ENCODE measurements at regions of chr1 and their contacts with region 1.

Region 1: DNA sequence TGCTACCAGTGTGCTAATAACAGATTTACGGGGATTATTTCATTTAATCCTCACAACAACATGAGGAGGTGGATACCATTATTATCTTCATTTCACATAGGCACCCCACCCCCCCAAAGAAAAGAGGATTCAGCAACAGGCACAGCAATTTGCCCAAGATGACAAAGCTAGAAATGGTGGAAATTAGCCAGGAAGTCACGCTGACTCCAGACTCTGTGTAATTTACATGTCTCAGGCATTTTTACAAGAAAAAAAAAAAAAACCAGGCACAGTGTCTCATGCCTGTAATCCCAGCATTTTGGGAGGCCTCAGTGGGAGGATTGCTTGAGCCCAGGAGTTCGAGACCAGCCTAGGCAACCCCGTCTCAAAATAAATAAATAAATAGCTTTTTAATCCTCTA is 37.5 kb upstream of the PRDM2 start:
- DNase-seq: no peak
- H3K4me3 ChIP-seq: no peak overlapping the region
- H3K27ac ChIP-seq: no peak overlapping the region
- H3K4me1 ChIP-seq: no peaks in the 10 kb centered on the region
- H3K27me3 ChIP-seq: no peaks in the 10 kb centered on the region
- CTCF ChIP-seq: no peak
- EP300 ChIP-seq: no peak
- POLR2A ChIP-seq: no peak
- RAD21 ChIP-seq: no peak

Region 2: GRCh38 chr1:13643017-13643416 is 19.5 kb before region 1 on chr1:
- CTCF ChIA-PET with region 1: no interaction called
- POLR2A ChIA-PET with region 1: no interaction called
- DNase-seq: no peak
- H3K4me3 ChIP-seq: no peak overlapping the region
- H3K27ac ChIP-seq: no peak overlapping the region
- H3K4me1 ChIP-seq: no peaks in the 10 kb centered on the region
- H3K27me3 ChIP-seq: no peaks in the 10 kb centered on the region
- CTCF ChIP-seq: no peak
- EP300 ChIP-seq: no peak
- POLR2A ChIP-seq: no peak
- RAD21 ChIP-seq: no peak

Region 3: DNA sequence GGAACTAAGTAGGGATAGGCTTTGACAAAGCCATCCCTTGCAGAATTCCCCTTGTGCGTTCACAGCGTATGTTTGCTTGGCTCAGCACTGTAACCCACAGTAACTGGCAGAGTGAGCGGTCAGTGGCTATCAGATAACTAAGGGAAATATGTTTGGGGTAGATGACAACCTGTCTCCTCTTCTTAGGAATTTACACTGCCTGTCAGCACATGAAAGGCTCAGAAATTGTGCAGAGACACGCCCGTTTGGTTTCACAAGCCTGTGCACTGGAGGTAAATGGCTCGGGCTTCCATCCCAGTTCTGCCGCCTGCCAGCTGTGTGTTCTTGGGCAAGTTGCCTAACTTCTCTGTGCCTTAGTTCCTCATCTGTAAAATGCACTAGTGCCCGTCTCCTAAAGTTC is 138.7 kb after region 1 on chr1:
- CTCF ChIA-PET with region 1: interaction called, 13 read pairs
- POLR2A ChIA-PET with region 1: no interaction called
- DNase-seq: no peak
- H3K4me3 ChIP-seq: no peak overlapping the region
- H3K27ac ChIP-seq: no peak overlapping the region
- H3K4me1 ChIP-seq: peaks cover 0 to 3% (median 1%) of the 10 kb centered on the region in 4 experiments; a peak in 2 of 7 replicates
- H3K27me3 ChIP-seq: no peaks in the 10 kb centered on the region; a peak in 1 of 7 replicates
- CTCF ChIP-seq: no peak
- EP300 ChIP-seq: no peak
- POLR2A ChIP-seq: no peak
- RAD21 ChIP-seq: no peak

Measured in H1 (cell line).